ENCODE measurements at regions of chr2 and their contacts with region 1.

Region 1: GRCh38 chr2:126657636-126658318 is 1.8 kb downstream of the GYPC start:
- DNase-seq: peak; percentile 61 to 87 (median 74)
- H3K4me3 ChIP-seq: peak overlapping the region; percentile 79 to 96
- H3K4me3 Mint-ChIP-seq: peak overlapping the region; percentile 96 to 99 (median 98)
- H3K27ac ChIP-seq: peak overlapping the region; percentile 78
- H3K27ac Mint-ChIP-seq: peak overlapping the region; percentile 96 to 99 (median 97)
- H3K4me1 ChIP-seq: peaks cover 58% of the 10 kb centered on the region
- H3K4me1 Mint-ChIP-seq: peaks cover 42 to 77% (median 63%) of the 10 kb centered on the region in 4 donors
- H3K27me3 ChIP-seq: no peaks in the 10 kb centered on the region
- H3K27me3 Mint-ChIP-seq: no peaks in the 10 kb centered on the region

Region 2: DNA sequence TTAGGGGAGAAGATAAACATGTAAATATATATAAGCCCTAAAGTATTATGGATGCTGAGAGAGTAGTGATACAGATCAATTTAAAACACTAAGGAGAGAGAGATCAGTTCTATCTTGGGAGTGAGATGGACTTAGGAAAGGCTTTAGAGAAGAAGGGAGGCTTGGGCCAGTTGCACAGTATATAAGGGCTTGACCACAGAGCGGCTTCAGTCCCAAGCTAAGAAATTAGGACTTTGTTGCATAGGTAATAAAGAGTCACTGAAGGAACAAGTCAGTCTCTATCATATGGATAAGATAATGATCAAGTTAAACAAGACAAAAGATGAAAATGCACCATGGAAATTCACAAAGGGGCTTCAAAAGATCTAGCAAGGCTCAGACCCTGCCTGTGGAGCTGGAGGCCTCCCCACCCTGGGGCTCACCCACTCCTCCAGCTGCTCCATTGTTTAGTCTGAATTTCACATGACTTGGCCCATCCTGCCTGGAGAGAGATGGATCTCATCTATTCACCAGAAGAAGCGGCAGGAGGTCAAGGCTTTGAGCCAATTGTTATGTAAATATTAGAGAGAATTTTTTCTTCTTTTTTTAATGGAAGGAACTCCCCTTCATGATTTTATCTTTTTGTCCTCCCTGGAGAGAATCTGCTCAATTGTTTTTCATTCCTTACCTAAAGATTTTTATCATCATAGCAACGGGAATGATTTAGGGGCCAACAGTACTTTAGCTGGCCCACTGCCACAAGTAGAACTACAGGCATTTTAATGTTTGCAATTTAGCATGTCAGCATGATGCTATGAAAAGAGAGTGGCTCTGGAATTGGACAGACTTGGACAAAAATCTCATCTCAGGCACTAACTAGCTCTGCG is 42.2 kb after region 1 on chr2:
- CTCF ChIA-PET with region 1: interaction called, 3 read pairs
- POLR2A ChIA-PET with region 1: interaction called, 3 read pairs
- intact Hi-C with region 1: loop called (anchors 5 kb)
- DNase-seq: no peak
- H3K4me3 ChIP-seq: no peak overlapping the region
- H3K4me3 Mint-ChIP-seq: no peak overlapping the region
- H3K27ac ChIP-seq: no peak overlapping the region
- H3K27ac Mint-ChIP-seq: peak overlapping the region in 5 of 7 donors; percentile 7 to 65 (median 56)
- H3K4me1 ChIP-seq: no peaks in the 10 kb centered on the region
- H3K4me1 Mint-ChIP-seq: peaks cover 0 to 10% (median 3%) of the 10 kb centered on the region in 4 donors
- H3K27me3 ChIP-seq: no peaks in the 10 kb centered on the region
- H3K27me3 Mint-ChIP-seq: peaks cover 0 to 1% of the 10 kb centered on the region in 2 donors

Region 3: DNA sequence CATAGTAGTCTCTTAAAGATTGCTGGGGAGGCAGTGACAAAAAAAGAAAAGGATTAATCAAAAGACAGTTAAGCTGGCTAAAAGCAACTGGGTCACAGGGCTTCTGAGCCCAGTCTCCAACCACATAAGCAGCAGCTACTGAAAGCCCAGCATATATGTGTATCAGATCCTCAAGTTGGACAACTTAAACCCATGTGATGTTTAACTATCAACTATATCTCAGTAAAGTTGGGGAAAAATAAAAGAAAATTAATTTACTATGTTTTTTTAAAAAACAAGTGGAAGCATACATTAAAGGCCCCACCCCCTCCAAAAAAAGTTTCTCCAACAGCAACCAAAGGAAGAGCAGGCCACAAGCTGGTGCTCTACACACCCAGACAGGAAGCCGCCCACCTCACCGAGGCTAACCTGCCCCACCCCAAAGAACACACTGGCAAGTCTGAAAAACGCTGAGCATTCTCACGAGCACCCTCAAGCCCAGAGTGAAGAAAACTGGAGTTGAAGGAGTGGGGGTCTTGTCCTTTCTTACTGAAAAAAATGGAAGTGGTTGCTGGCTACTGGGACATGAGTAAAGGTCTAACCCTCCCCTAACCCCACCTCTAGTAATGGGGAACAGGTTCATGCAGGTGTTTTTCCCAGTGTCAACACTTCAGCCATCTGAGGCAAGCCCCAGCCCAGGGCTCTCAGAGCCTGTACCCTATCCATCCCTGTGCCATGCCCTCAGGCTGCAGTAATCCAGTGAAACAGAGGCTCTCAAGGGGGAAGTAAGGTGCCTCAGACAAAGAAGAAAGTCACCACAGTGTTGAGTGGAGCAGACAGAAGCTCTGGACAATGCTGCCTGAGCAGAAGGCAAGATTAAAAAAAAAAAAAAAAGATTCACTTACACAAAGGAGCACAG is 104.5 kb after region 1 on chr2:
- CTCF ChIA-PET with region 1: no interaction called
- POLR2A ChIA-PET with region 1: interaction called, 15 read pairs
- intact Hi-C with region 1: loop called (anchors 1 kb)
- DNase-seq: peak; percentile 27 to 67 (median 59)
- H3K4me3 ChIP-seq: peak overlapping the region in 1 of 2 donors; percentile 11
- H3K4me3 Mint-ChIP-seq: peak overlapping the region; percentile 59 to 82 (median 72)
- H3K27ac ChIP-seq: peak overlapping the region; percentile 36
- H3K27ac Mint-ChIP-seq: peak overlapping the region; percentile 81 to 96 (median 90)
- H3K4me1 ChIP-seq: peaks cover 46% of the 10 kb centered on the region
- H3K4me1 Mint-ChIP-seq: peaks cover 34 to 75% (median 52%) of the 10 kb centered on the region in 4 donors
- H3K27me3 ChIP-seq: no peaks in the 10 kb centered on the region
- H3K27me3 Mint-ChIP-seq: no peaks in the 10 kb centered on the region